Ovary (tissue), 10 donors: ENCODE measurements at regions of chr5 and their contacts with region 1.

Region 1: DNA sequence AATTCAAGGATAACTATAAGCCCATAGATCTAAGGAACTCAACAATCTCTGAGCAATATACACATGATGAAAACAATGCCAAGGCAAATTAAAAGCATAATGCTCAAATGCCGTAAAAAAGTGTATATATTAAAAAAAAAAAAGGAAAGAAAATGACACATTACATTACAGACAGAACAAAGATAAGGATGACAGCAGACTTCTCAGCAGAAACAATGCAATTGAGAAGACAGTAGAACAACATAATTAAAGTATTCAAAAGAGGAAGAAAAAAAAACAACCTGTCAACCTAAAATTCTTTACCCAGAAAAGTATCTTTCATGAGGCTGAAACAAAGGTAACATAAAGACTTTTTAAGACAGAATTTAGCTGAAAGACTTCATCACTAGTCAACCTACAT is 591.7 kb downstream of the ZNF608 start:
- DNase-seq: no peak
- H3K4me3 ChIP-seq: no peak overlapping the region
- H3K27ac ChIP-seq: no peak overlapping the region
- H3K4me1 ChIP-seq: no peaks in the 10 kb centered on the region
- H3K27me3 ChIP-seq: no peaks in the 10 kb centered on the region
- CTCF ChIP-seq: no peak
- EP300 ChIP-seq: no peak
- POLR2A ChIP-seq: no peak

Region 2: GRCh38 chr5:125775896-125776295 is 1621.2 kb after region 1 on chr5:
- intact Hi-C with region 1: loop called in 1 of 4 experiments (anchors 5 kb)
- DNase-seq: no peak
- H3K4me3 ChIP-seq: no peak overlapping the region
- H3K27ac ChIP-seq: no peak overlapping the region
- H3K4me1 ChIP-seq: no peaks in the 10 kb centered on the region
- H3K27me3 ChIP-seq: no peaks in the 10 kb centered on the region
- CTCF ChIP-seq: no peak
- EP300 ChIP-seq: no peak
- POLR2A ChIP-seq: no peak